Psoas muscle (tissue), 8 donors: ENCODE measurements at regions of chr12 and their contacts with region 1.

Region 1: GRCh38 chr12:124289634-124290598 is 5.0 kb upstream of the RFLNA start:
- DNase-seq: peak; percentile 59 to 86
- ATAC-seq: peak; percentile 98 to 99 (median 99)
- H3K4me3 ChIP-seq: peak overlapping the region; percentile 50
- H3K27ac ChIP-seq: peak overlapping the region; percentile 89
- H3K4me1 ChIP-seq: peaks cover 13% of the 10 kb centered on the region
- H3K27me3 ChIP-seq: peaks cover 0 to 2% (median 0%) of the 10 kb centered on the region in 3 donors
- CTCF ChIP-seq: no peak

Region 2: DNA sequence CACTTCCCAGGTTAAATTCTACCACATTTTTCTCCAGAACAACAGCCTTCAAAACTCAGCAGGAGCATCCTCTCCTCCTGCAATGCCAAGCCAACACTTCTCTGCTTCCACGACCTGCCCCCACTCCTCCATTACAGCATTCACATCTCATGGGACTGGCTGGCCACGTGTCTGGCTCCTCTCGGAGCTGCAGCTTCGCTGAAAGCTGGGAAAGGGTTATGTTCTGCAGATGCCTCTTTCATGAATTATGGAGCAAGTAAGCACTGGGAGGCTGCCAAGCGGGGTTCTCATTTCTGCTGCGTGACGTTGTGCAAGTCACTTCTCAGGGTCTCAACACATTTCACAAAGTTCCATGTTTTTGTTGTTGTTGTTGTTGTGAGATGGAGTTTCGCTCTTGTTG is 137.2 kb before region 1 on chr12:
- intact Hi-C with region 1: loop called in 1 of 2 experiments (anchors 10 kb)
- DNase-seq: peak in 1 of 2 donors; percentile 17
- ATAC-seq: no peak
- H3K4me3 ChIP-seq: no peak overlapping the region
- H3K27ac ChIP-seq: no peak overlapping the region
- H3K4me1 ChIP-seq: peaks cover 3% of the 10 kb centered on the region
- H3K27me3 ChIP-seq: no peaks in the 10 kb centered on the region
- CTCF ChIP-seq: no peak

Region 3: DNA sequence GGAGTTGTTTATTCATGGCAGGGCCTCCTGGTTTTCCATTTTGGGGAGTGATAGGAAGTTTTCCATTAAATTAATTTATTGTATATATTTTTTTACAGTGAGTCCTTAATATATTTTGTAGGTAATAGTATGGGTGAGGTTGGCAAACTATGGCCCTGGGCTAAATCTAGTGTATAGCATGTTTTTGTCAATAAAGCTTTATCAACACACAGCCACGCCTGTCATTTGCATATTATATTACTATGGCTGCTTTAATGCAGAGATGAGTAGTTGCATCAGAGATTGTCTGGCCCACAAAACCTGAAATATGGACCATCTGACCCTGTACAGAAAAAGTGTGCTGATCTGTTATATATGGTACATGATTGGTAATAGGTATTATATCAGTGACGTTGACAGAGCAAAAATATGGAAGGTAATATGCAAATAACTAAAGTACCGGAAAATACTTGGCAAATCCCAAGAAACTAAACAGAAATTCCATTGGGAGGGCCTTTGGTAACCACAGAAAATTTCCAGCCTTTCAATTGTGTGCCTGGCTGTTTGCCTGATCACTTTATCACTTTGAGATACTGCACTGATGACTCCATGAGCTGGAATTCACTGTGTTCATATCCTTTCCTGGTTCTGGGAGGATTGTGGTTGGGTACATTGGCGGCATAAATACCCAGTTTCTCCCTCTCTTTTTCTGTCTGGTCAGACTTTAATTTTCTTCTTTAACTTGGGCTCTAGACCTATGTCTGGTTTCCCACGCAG is 56.7 kb before region 1 on chr12:
- intact Hi-C with region 1: loop called in 1 of 2 experiments (anchors 5 kb)
- DNase-seq: no peak
- ATAC-seq: no peak
- H3K4me3 ChIP-seq: no peak overlapping the region
- H3K27ac ChIP-seq: no peak overlapping the region
- H3K4me1 ChIP-seq: peaks cover 7% of the 10 kb centered on the region
- H3K27me3 ChIP-seq: no peaks in the 10 kb centered on the region
- CTCF ChIP-seq: no peak